Naive thymus-derived CD4-positive, alpha-beta T cell (primary cell): ENCODE measurements at regions of chr19 and their contacts with region 1.

Region 1: DNA sequence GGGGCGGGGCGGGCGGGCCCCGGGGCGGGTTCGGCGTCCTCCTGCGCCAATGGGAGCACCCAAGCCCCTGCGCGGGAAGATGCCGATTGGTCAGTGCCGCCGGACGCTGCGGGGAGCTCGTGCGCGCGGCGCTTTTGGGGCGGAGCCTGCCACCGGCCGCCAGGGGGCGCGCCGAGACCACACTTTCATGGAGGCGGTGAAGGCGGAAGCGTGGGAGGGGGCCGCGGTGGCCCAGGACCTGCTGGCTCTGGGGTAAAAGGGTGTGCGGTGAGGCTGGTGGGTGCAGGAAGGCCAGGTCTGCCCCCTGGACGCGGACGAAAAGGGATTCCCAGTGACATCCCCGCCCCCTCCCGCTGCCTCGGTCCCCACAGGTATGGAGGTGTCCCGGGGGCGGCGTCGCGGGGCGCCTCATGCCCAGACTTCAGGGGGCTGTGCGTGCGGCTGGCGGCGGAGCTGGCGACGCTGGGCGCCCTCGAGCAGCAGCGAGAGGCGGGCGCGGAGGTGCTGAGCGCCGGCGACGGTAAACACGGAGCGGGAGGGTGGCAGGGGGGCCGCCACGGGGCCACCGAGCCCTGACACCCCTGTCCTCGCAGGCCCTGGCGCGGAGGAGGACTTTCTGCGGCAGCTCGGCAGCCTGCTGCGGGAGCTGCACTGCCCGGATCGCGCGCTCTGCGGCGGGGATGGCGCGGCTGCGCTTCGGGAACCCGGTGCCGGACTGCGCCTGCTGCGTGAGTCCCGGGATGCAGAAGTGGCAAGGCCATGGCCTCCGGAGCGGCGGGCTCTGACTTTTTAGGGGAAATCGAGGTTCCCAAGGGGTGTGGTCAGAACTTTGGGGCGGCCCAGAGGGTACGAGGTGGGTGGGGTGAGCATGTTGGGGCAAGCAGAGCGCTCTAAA is at the start of gene FAM98C:
- DNase-seq: peak; percentile 97 to 99 (median 99)
- ATAC-seq: peak; percentile 98
- H3K4me3 ChIP-seq: peak within 1 kb of the TSS; percentile 79
- H3K4me3 Mint-ChIP-seq: peak within 1 kb of the TSS; percentile 79 to 98 (median 90)
- H3K27ac ChIP-seq: peak within 1 kb of the TSS; percentile 83
- H3K27ac Mint-ChIP-seq: peak within 1 kb of the TSS; percentile 79 to 97 (median 95)
- H3K4me1 ChIP-seq: peaks cover 5 to 8% of the 10 kb centered on the region in 2 donors
- H3K4me1 Mint-ChIP-seq: peaks cover 7 to 21% (median 19%) of the 10 kb centered on the region in 7 donors
- H3K27me3 ChIP-seq: no peaks in the 10 kb centered on the region
- H3K27me3 Mint-ChIP-seq: peaks cover 0 to 10% (median 0%) of the 10 kb centered on the region in 5 donors
- total RNA-seq, gene FAM98C: 33.8 to 56.5 (median 44.7) TPM

Region 2: GRCh38 chr19:37906869-37907734 is 496.1 kb before region 1 on chr19 and contains the start of gene SIPA1L3:
- CTCF ChIA-PET with region 1: no interaction called
- POLR2A ChIA-PET with region 1: interaction called, 7 read pairs
- intact Hi-C with region 1: loop called in 1 of 2 experiments (anchors 1 kb)
- DNase-seq: peak; percentile 77 to 91 (median 89)
- ATAC-seq: peak; percentile 99
- H3K4me3 ChIP-seq: peak within 1 kb of the TSS; percentile 99
- H3K4me3 Mint-ChIP-seq: peak within 1 kb of the TSS; percentile 69 to 96 (median 90)
- H3K27ac ChIP-seq: peak within 1 kb of the TSS; percentile 89
- H3K27ac Mint-ChIP-seq: peak within 1 kb of the TSS; percentile 67 to 95 (median 90)
- H3K4me1 ChIP-seq: peaks cover 6 to 9% of the 10 kb centered on the region in 2 donors
- H3K4me1 Mint-ChIP-seq: peaks cover 24 to 39% (median 35%) of the 10 kb centered on the region in 7 donors
- H3K27me3 ChIP-seq: no peaks in the 10 kb centered on the region
- H3K27me3 Mint-ChIP-seq: peaks cover 0 to 2% (median 0%) of the 10 kb centered on the region in 5 donors
- total RNA-seq, gene SIPA1L3: 17.4 to 38.7 (median 34.8) TPM

Region 3: DNA sequence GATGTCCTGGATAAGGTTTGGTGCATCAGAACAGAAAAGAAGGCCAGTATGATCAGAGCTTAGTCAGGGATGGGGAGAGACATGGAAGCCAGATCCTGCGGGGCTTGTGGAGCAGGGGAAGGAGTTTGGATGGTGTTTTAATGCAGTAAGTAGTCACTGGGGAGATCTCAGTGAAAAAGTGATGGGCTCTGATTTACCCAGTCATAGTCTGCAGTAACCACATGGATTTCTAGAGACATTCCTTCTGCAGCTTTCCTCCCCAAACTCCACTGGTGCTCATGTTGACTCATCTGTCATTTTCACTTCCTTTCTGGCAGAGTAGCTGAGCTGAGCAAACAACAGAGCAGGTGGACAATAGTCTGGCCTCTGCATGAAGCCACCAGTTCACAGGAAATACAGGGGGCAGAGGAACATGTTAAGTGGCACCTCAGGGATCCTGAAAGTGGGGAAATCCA is 323.3 kb before region 1 on chr19:
- CTCF ChIA-PET with region 1: no interaction called
- POLR2A ChIA-PET with region 1: no interaction called
- intact Hi-C with region 1: no loop called
- DNase-seq: no peak
- ATAC-seq: peak; percentile 41
- H3K4me3 ChIP-seq: no peak overlapping the region
- H3K4me3 Mint-ChIP-seq: no peak overlapping the region
- H3K27ac ChIP-seq: no peak overlapping the region
- H3K27ac Mint-ChIP-seq: peak overlapping the region in 1 of 9 donors; percentile 59
- H3K4me1 ChIP-seq: no peaks in the 10 kb centered on the region
- H3K4me1 Mint-ChIP-seq: peaks cover 3 to 18% (median 9%) of the 10 kb centered on the region in 7 donors
- H3K27me3 ChIP-seq: no peaks in the 10 kb centered on the region
- H3K27me3 Mint-ChIP-seq: no peaks in the 10 kb centered on the region

Region 4: GRCh38 chr19:38326591-38326990 is 76.6 kb before region 1 on chr19:
- CTCF ChIA-PET with region 1: no interaction called
- POLR2A ChIA-PET with region 1: no interaction called
- intact Hi-C with region 1: no loop called
- DNase-seq: no peak
- ATAC-seq: no peak
- H3K4me3 ChIP-seq: no peak overlapping the region
- H3K4me3 Mint-ChIP-seq: no peak overlapping the region
- H3K27ac ChIP-seq: no peak overlapping the region
- H3K27ac Mint-ChIP-seq: no peak overlapping the region
- H3K4me1 ChIP-seq: no peaks in the 10 kb centered on the region
- H3K4me1 Mint-ChIP-seq: peaks cover 8 to 14% (median 11%) of the 10 kb centered on the region in 7 donors
- H3K27me3 ChIP-seq: no peaks in the 10 kb centered on the region
- H3K27me3 Mint-ChIP-seq: no peaks in the 10 kb centered on the region

Region 5: DNA sequence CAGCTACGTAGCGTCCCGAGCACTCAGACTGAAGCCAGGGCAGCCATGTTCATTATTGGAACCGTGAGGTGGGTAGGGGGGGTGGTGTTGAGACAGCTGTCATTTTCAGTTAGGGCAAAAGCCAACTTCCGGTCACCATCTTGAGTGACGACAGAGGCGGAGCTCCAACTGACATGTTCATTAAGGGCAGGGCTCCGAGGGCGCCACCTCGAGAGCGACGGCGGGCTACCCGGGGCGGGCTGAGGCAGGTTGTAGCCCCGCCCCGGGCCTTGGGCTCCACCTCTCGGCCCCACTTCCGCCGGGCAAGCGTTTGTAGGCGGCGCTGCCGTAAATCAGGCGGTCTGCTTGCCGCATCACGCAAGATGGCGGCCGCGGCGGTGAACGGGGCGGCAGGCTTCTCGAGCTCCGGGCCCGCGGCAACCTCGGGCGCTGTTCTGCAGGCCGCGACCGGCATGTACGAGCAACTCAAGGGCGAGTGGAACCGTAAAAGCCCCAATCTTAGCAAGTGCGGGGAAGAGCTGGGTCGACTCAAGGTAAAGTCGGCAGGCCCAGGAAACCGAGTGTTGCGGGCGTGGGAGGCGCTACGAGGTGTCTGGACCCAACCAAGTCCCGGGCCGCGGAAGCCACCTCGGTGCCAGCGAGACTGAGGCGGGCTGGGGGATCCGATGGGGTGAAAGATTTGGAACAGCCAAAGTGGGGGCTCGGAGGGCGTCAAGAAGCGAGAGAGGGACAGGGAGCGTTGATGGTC is 28.6 kb before region 1 on chr19 and contains the start of gene PSMD8:
- CTCF ChIA-PET with region 1: interaction called, 12 read pairs
- POLR2A ChIA-PET with region 1: interaction called, 40 read pairs
- intact Hi-C with region 1: loop called in 1 of 2 experiments (anchors 1 kb)
- DNase-seq: peak; percentile 95 to 99 (median 99)
- ATAC-seq: peak; percentile 99
- H3K4me3 ChIP-seq: peak within 1 kb of the TSS; percentile 96
- H3K4me3 Mint-ChIP-seq: peak within 1 kb of the TSS; percentile 96 to 100 (median 98)
- H3K27ac ChIP-seq: peak within 1 kb of the TSS; percentile 93
- H3K27ac Mint-ChIP-seq: peak within 1 kb of the TSS; percentile 90 to 99 (median 98)
- H3K4me1 ChIP-seq: peaks cover 17 to 19% of the 10 kb centered on the region in 2 donors
- H3K4me1 Mint-ChIP-seq: peaks cover 17 to 32% (median 29%) of the 10 kb centered on the region in 7 donors
- H3K27me3 ChIP-seq: peaks cover 0 to 4% of the 10 kb centered on the region in 2 donors
- H3K27me3 Mint-ChIP-seq: peaks cover 0 to 8% (median 2%) of the 10 kb centered on the region in 5 donors
- total RNA-seq, gene PSMD8: 68.4 to 181 (median 75.8) TPM

Region 6: DNA sequence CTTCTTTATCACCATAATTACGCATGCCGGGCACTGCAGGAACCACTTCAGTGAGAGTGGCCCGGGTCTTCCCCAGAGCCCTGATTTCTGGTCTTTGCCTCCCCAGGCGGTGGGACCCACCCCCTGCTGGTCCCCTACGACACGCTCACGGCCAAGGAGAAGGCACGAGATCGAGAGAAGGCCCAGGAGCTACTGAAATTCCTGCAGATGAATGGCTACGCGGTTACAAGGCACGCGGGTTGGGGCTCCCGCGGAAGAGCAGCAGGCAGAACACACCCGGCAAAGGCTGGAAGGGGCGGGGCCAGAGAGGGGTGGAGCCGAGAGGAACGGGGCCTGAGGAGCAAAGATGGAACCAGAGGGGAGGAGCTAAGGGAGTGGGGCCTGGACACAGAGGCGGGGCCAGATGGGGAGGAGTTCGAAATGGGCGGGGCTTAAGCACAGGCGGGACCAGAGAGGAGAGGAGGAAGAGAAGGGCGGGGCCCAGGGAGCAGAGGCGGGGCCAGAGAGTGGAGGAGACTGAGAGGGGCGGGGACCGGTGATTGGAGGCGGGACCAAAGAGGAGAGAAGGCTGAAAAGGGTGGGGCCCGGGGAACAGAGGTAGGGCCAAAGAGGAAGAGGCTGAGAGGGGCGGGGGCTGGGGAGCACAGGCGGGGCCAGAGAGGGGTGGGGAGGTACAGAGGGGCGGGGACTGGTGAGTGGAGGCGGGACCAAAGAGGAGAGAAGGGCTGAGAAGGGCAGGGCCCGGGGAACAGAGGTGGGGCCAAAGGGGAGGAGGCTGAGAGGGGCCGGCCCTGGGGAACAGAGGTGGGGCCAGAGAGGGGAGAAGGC is 103.7 kb after region 1 on chr19:
- CTCF ChIA-PET with region 1: no interaction called
- POLR2A ChIA-PET with region 1: no interaction called
- intact Hi-C with region 1: loop called in 1 of 2 experiments (anchors 2 kb)
- DNase-seq: peak; percentile 44 to 91 (median 82)
- ATAC-seq: peak; percentile 95
- H3K4me3 ChIP-seq: no peak overlapping the region
- H3K4me3 Mint-ChIP-seq: peak overlapping the region in 8 of 10 donors; percentile 12 to 56 (median 33)
- H3K27ac ChIP-seq: no peak overlapping the region
- H3K27ac Mint-ChIP-seq: peak overlapping the region in 1 of 9 donors; percentile 14
- H3K4me1 ChIP-seq: peaks cover 0 to 6% of the 10 kb centered on the region in 2 donors
- H3K4me1 Mint-ChIP-seq: peaks cover 0 to 10% (median 5%) of the 10 kb centered on the region in 7 donors
- H3K27me3 ChIP-seq: no peaks in the 10 kb centered on the region
- H3K27me3 Mint-ChIP-seq: peaks cover 0 to 10% (median 4%) of the 10 kb centered on the region in 5 donors

Region 7: GRCh38 chr19:38618590-38619360 is 215.6 kb after region 1 on chr19 and contains the start of gene EIF3K:
- CTCF ChIA-PET with region 1: interaction called, 18 read pairs
- POLR2A ChIA-PET with region 1: interaction called, 29 read pairs
- intact Hi-C with region 1: loop called (anchors 1 to 2 kb)
- DNase-seq: peak; percentile 94 to 99 (median 96)
- ATAC-seq: peak; percentile 86
- H3K4me3 ChIP-seq: peak within 1 kb of the TSS; percentile 96
- H3K4me3 Mint-ChIP-seq: peak within 1 kb of the TSS; percentile 95 to 100 (median 98)
- H3K27ac ChIP-seq: peak within 1 kb of the TSS; percentile 99
- H3K27ac Mint-ChIP-seq: peak within 1 kb of the TSS; percentile 89 to 100 (median 97)
- H3K4me1 ChIP-seq: peaks cover 33 to 40% of the 10 kb centered on the region in 2 donors
- H3K4me1 Mint-ChIP-seq: peaks cover 38 to 61% (median 44%) of the 10 kb centered on the region in 7 donors
- H3K27me3 ChIP-seq: no peaks in the 10 kb centered on the region
- H3K27me3 Mint-ChIP-seq: no peaks in the 10 kb centered on the region
- total RNA-seq, gene EIF3K: 294 to 405 (median 337) TPM

Region 8: DNA sequence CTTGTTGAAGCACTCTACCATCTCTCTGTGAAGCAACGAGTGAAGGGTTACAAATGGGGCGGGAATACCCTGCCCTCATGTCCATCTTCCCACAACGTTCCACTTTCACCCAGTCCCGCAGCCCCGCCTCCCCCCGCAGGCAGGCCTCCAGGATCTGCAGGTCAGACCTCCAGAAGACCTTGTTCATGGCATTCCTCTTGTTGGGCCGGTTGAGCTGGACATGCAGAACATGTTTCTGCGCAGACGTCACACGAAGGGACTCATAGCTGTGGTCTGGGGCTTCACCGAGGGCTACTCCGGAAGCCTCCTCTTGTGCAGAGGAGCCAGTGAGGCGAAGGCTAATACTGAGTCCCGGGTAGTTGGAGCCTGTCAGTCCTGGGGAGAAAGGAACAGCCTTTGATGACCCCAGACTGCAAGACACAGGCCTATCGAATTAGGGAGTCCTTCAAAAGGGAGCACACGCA is 428.0 kb after region 1 on chr19:
- CTCF ChIA-PET with region 1: no interaction called
- POLR2A ChIA-PET with region 1: no interaction called
- intact Hi-C with region 1: loop called in 1 of 2 experiments (anchors 2 kb)
- DNase-seq: peak in 1 of 9 donors; percentile 48
- ATAC-seq: peak; percentile 20
- H3K4me3 ChIP-seq: peak overlapping the region; percentile 80
- H3K4me3 Mint-ChIP-seq: peak overlapping the region; percentile 90 to 97 (median 94)
- H3K27ac ChIP-seq: peak overlapping the region; percentile 84
- H3K27ac Mint-ChIP-seq: peak overlapping the region; percentile 78 to 97 (median 92)
- H3K4me1 ChIP-seq: peaks cover 12 to 21% of the 10 kb centered on the region in 2 donors
- H3K4me1 Mint-ChIP-seq: peaks cover 14 to 54% (median 38%) of the 10 kb centered on the region in 7 donors
- H3K27me3 ChIP-seq: no peaks in the 10 kb centered on the region
- H3K27me3 Mint-ChIP-seq: no peaks in the 10 kb centered on the region

Region 9: GRCh38 chr19:38891771-38892170 is 488.6 kb after region 1 on chr19:
- CTCF ChIA-PET with region 1: interaction called, 14 read pairs
- POLR2A ChIA-PET with region 1: interaction called, 5 read pairs
- intact Hi-C with region 1: loop called (anchors 1 kb)
- DNase-seq: no peak
- ATAC-seq: no peak
- H3K4me3 ChIP-seq: no peak overlapping the region
- H3K4me3 Mint-ChIP-seq: no peak overlapping the region
- H3K27ac ChIP-seq: no peak overlapping the region
- H3K27ac Mint-ChIP-seq: no peak overlapping the region
- H3K4me1 ChIP-seq: peaks cover 0 to 3% of the 10 kb centered on the region in 2 donors
- H3K4me1 Mint-ChIP-seq: peaks cover 0 to 17% (median 8%) of the 10 kb centered on the region in 7 donors
- H3K27me3 ChIP-seq: no peaks in the 10 kb centered on the region
- H3K27me3 Mint-ChIP-seq: no peaks in the 10 kb centered on the region